HEK293 (cell line): ENCODE measurements at regions of chr7 and their contacts with region 1.

Region 1: DNA sequence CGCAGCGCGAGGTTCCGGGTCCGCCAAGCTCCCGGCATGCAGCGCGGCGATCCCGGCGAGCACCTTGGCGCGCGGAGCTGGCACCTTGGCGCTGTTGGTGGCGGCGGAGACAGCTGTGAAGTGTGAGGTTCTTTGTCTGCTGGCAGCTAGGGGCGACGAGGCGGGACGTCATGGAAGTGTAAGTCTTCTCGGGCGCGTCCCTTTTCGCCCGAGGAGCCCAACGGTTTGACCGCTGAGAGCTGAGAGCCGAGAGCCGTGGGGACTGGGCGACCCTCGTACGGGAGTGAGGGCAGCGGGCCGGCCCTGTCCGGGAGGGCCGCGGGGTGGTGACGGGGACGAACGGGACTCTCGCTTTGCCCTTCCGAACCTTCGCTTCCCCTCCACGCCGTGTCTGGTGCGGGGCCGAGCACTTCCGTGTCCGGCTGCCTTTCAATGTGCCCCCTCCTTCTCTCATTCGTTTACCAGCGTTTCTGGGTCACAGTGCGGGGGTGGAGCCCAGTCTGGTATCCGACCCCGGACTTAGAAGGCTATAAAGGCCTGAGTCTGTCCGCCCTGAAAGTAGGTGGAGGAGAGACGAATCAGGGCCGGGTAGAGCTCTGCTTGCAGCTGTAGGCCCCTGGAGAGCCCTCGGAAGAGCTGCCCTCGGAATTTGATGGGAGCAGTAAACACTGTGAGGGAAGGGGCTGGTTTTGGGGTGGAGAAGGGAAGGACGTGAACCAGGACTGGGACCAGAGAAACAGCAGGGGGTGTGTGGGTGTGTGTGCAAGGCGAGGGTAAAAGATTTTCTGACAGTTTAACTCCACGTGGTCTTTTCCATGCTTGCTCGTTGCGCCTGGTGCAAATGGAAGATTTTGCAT is at the start of gene CRCP:
- H3K4me3 ChIP-seq: peak within 1 kb of the TSS; percentile 85
- H3K27ac ChIP-seq: peak within 1 kb of the TSS; percentile 93
- H3K4me1 ChIP-seq: peaks cover 7% of the 10 kb centered on the region
- CTCF ChIP-seq: peak; percentile 74

Region 2: GRCh38 chr7:66075590-66076461 is 39.2 kb before region 1 on chr7 and contains the start of gene ASL:
- CTCF ChIA-PET with region 1: no interaction called
- POLR2A ChIA-PET with region 1: interaction called, 15 read pairs
- H3K4me3 ChIP-seq: peak within 1 kb of the TSS; percentile 87
- H3K27ac ChIP-seq: no peak within 1 kb of the TSS; the same call in 1 of the 2 replicates
- H3K4me1 ChIP-seq: no peaks in the 10 kb centered on the region
- CTCF ChIP-seq: peak; percentile 44; the same call in 1 of the 2 replicates

Region 3: GRCh38 chr7:66099616-66100474 is 15.2 kb before region 1 on chr7:
- CTCF ChIA-PET with region 1: interaction called, 4 read pairs
- POLR2A ChIA-PET with region 1: interaction called, 10 read pairs
- H3K4me3 ChIP-seq: peak overlapping the region; percentile 13
- H3K27ac ChIP-seq: peak overlapping the region; percentile 1; the same call in 1 of the 2 replicates
- H3K4me1 ChIP-seq: no peaks in the 10 kb centered on the region
- CTCF ChIP-seq: no peak